Psoas muscle (tissue), 8 donors: ENCODE measurements at regions of chr15 and their contacts with region 1.

Region 1: DNA sequence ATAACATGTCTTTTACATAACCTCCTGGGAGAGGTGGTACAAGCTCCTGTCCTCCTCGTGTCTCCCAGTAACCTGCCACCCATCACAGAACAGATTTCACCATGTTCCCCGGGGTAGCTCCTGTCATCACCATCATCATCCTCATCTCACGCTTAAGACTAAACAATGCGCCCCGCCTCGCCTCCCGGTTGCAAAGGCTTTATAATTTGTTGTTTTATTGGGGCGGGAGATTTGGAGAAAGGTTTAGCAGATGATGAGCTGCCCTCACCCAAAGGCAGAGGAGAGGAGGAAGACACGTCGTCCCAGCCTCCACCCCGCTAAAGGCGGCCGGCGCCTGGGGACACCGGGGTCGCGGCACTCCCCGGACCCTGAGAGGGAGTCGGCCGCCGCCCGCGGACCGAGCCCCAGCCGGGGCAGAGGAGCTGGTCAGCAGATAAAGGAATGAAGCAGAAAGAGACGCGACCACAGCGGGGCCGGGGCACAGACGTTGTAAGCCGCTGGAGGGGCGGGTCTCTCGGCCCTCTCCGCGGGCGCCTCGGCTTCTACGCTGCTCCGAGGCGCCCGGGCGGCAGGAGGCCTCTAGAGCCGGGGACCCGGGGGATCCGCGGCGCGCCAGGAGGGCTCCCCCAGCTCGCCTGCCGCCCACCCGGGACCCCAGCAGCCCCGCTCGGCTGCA is 589 bp downstream of the HERC1 start:
- DNase-seq: peak; percentile 50 to 70
- ATAC-seq: peak; percentile 66 to 75 (median 68)
- H3K4me3 ChIP-seq: peak overlapping the region; percentile 93
- H3K27ac ChIP-seq: peak overlapping the region; percentile 95
- H3K4me1 ChIP-seq: peaks cover 29% of the 10 kb centered on the region
- H3K27me3 ChIP-seq: no peaks in the 10 kb centered on the region
- CTCF ChIP-seq: no peak

Region 2: GRCh38 chr15:63891079-63891767 is 58.1 kb after region 1 on chr15:
- intact Hi-C with region 1: loop called (anchors 5 kb)
- DNase-seq: peak; percentile 79 to 86
- ATAC-seq: peak in 3 of 4 donors; percentile 42 to 59 (median 48)
- H3K4me3 ChIP-seq: no peak overlapping the region
- H3K27ac ChIP-seq: no peak overlapping the region
- H3K4me1 ChIP-seq: peaks cover 55% of the 10 kb centered on the region
- H3K27me3 ChIP-seq: no peaks in the 10 kb centered on the region
- CTCF ChIP-seq: peak; percentile 81